Ovary (tissue), 10 donors: ENCODE measurements at regions of chr16 and their contacts with region 1.

Region 1: GRCh38 chr16:84020353-84020752 is 22.2 kb downstream of the SLC38A8 start:
- DNase-seq: no peak
- H3K4me3 ChIP-seq: no peak overlapping the region
- H3K27ac ChIP-seq: no peak overlapping the region
- H3K4me1 ChIP-seq: no peaks in the 10 kb centered on the region
- H3K27me3 ChIP-seq: no peaks in the 10 kb centered on the region
- CTCF ChIP-seq: no peak
- EP300 ChIP-seq: no peak
- POLR2A ChIP-seq: no peak

Region 2: DNA sequence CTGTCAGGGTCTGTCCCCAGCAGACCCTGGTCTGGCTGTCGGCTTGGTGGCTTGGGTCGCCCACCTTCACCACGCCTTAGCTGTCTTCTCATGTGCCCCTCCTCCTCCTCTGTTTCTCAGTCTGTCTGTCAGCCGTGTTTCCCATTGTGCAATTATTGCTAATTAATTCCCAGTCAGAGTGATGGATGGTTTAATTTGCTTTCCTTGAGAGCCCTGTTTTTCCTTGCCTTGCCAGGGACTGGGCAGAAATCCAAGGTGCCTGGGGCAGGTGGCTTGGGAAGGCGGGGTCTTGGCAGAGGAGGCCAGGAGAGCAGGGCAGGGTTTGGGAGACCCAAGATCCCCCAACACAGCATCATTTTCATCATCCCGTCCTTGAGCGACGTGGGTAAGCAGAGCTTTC is 31.1 kb before region 1 on chr16:
- intact Hi-C with region 1: loop called in 1 of 4 experiments (anchors 2 kb)
- DNase-seq: no peak
- H3K4me3 ChIP-seq: no peak overlapping the region
- H3K27ac ChIP-seq: no peak overlapping the region
- H3K4me1 ChIP-seq: no peaks in the 10 kb centered on the region
- H3K27me3 ChIP-seq: no peaks in the 10 kb centered on the region
- CTCF ChIP-seq: no peak
- EP300 ChIP-seq: no peak
- POLR2A ChIP-seq: no peak